ENCODE measurements at regions of chr11 and their contacts with region 1.

Region 1: DNA sequence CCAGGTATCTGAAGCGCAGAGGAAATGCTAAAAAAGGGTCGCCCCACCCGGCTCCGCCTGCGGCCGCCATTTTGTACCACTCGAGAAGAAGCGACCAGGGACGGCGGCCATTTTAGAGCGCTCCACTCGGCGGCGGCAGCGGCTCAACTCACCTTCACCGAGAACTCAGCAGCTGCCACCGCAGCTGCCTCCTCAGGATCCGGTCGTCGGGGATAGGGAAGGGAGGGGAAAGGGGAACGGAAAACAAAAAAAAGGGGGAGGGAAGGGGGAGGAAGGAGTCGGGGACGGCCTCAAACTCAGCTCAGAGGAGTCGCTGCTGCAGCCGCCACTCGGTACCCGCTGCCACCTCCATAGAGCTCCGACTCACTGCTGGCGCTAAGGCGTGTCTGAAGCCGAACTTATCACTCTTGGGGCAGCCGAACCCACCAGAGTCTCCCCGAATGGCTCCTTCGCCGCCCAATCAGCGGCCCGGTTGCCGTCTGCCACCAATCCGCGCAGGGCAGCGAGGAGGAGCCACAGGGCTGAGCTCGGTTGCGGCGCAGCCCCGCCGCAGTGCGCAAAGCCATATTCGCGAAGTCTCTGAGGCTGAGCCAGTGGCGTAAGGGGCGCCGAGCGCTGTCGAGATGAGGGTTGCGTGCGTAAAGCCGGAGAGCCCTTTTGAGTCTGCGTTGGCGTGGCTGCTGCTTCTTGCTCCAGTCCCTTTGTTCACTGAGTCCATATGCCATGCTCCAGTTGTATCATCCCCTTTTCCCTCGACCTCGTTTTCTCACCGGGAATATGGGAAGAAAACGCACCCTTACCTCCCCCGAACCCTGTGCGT is at the start of gene EIF4G2:
- DNase-seq: peak; percentile 98
- ATAC-seq: peak; percentile 94
- H3K4me3 Mint-ChIP-seq: peak within 1 kb of the TSS; percentile 86
- H3K27ac Mint-ChIP-seq: peak within 1 kb of the TSS; percentile 98
- H3K4me1 Mint-ChIP-seq: peaks cover 47% of the 10 kb centered on the region
- H3K27me3 Mint-ChIP-seq: no peaks in the 10 kb centered on the region
- total RNA-seq, gene EIF4G2: 667 to 682 TPM

Region 2: DNA sequence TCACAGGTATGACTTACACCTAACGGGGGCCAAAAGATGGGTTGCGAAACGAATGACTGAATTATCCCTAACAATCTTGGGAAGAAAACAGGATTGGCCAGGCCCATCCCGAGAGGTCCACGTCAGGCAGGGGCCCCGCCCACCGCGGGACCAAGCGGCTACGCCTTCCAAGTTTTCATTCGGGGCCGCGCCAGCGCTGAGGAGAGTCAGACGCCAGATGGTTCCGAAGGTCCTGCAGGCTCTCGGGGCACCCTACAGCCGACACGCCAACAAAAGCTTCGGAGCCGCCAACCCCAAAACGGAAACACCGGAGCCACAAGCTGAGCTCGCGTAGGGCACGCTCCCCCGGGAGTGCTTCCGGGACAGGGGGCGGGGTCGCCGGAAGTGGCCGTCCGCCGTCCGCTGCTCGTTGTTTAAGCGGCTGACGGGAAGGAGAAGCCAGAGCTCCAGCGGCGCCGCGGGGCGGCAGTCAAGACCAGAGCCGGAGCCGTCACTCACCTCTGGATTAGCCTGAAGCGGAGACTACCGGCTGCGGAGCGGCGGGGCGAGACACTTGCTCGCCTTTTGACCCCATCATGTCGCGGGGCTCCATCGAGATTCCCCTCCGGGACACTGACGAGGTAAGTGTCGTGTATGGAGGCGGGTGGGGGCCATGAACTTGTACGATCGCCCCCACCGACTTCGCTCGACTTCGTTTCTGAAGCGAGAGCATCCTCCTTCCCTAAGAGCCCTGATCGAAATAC is 57.8 kb before region 1 on chr11 and contains the start of gene CTR9:
- CTCF ChIA-PET with region 1: interaction called, 3 read pairs
- POLR2A ChIA-PET with region 1: interaction called, 10 read pairs
- DNase-seq: peak; percentile 94
- ATAC-seq: peak; percentile 90
- H3K4me3 Mint-ChIP-seq: peak within 1 kb of the TSS; percentile 95
- H3K27ac Mint-ChIP-seq: peak within 1 kb of the TSS; percentile 89
- H3K4me1 Mint-ChIP-seq: peaks cover 31% of the 10 kb centered on the region
- H3K27me3 Mint-ChIP-seq: no peaks in the 10 kb centered on the region
- total RNA-seq, gene CTR9: 43.4 to 44.0 TPM

Region 3: GRCh38 chr11:10797531-10797930 is 11.2 kb before region 1 on chr11:
- CTCF ChIA-PET with region 1: interaction called, 50 read pairs
- POLR2A ChIA-PET with region 1: interaction called, 56 read pairs
- DNase-seq: no peak
- ATAC-seq: no peak
- H3K4me3 Mint-ChIP-seq: no peak overlapping the region
- H3K27ac Mint-ChIP-seq: no peak overlapping the region
- H3K4me1 Mint-ChIP-seq: peaks cover 80% of the 10 kb centered on the region
- H3K27me3 Mint-ChIP-seq: peaks cover 5% of the 10 kb centered on the region

Region 4: GRCh38 chr11:10838083-10838482 is 29.3 kb after region 1 on chr11:
- CTCF ChIA-PET with region 1: no interaction called
- POLR2A ChIA-PET with region 1: interaction called, 24 read pairs
- DNase-seq: no peak
- ATAC-seq: no peak
- H3K4me3 Mint-ChIP-seq: no peak overlapping the region
- H3K27ac Mint-ChIP-seq: no peak overlapping the region
- H3K4me1 Mint-ChIP-seq: no peaks in the 10 kb centered on the region
- H3K27me3 Mint-ChIP-seq: peaks cover 4% of the 10 kb centered on the region

Region 5: DNA sequence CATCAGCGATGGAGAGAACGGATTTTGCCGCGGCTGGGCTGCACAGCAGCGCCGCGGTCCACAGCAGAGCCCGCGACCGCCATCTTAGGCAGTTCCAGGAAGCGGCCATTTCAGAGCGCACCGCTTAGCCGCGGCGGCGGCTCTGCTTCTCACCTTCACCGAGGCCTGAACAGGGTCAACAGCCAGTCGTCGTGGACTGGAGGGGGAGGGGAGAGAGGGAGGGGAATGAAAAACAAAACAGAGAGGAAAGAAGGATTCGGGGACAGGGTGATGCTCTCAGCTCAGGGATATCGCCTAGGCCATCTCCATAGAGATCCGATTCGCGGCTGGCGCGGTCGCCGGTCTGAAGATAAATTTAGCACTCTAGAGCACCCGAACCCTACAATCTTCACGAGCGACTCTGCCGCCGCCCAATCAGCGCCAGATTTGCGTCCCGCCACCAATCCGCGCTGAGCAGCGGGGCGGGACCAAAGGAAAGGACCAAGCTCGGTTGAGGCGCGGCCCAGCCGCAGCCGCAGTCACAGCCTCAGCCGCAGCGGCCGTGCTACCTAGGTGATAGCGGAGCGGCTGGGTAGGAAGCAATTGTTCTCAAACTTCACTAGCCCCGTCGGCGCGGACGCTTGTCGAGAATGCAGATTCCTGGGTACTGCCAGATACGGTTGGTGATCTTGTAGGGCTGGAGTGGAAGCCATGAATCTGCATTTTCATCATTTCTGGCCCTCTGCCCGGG is 49.1 kb after region 1 on chr11 and contains the start of gene ZBED5:
- CTCF ChIA-PET with region 1: interaction called, 12 read pairs
- POLR2A ChIA-PET with region 1: interaction called, 226 read pairs
- DNase-seq: peak; percentile 96
- ATAC-seq: peak; percentile 92
- H3K4me3 Mint-ChIP-seq: peak within 1 kb of the TSS; percentile 99
- H3K27ac Mint-ChIP-seq: peak within 1 kb of the TSS; percentile 99
- H3K4me1 Mint-ChIP-seq: peaks cover 38% of the 10 kb centered on the region
- H3K27me3 Mint-ChIP-seq: no peaks in the 10 kb centered on the region
- total RNA-seq, gene ZBED5: 33.7 to 35.6 TPM

Region 6: GRCh38 chr11:10899121-10899830 is 90.5 kb after region 1 on chr11:
- CTCF ChIA-PET with region 1: no interaction called
- POLR2A ChIA-PET with region 1: interaction called, 20 read pairs
- DNase-seq: no peak
- ATAC-seq: no peak
- H3K4me3 Mint-ChIP-seq: no peak overlapping the region
- H3K27ac Mint-ChIP-seq: no peak overlapping the region
- H3K4me1 Mint-ChIP-seq: peaks cover 6% of the 10 kb centered on the region
- H3K27me3 Mint-ChIP-seq: no peaks in the 10 kb centered on the region

Measured in activated CD8-positive, alpha-beta T cell treated with anti-CD3 and anti-CD28 coated beads, Interleukin-2, amount 10 ng/mL, durations not matched to agents 7 days and 5 days (primary cell).